Right ventricle myocardium inferior (tissue), 1 donor: ENCODE measurements at regions of chr2 and their contacts with region 1.

Region 1: DNA sequence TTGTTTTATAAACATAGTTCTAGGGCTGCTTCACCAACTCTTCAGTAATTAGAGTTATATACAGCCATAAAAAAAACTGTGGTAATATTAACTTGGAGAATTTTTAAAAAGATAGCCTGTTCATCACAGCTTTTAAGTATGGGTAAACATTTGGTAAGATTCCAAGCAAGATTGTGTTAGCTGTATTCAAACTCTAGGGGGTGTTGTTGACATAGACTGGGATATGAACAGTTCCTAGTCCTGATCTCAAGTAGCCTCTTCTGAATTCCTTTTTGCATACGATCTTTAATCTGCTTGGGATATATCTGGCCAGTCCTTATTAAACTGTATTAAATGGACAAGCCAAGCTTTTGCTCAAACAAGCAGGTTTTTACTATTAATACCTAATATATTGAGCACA is 13.4 kb downstream of the NOP58 start:
- DNase-seq: no peak
- ATAC-seq: peak; percentile 77

Region 2: DNA sequence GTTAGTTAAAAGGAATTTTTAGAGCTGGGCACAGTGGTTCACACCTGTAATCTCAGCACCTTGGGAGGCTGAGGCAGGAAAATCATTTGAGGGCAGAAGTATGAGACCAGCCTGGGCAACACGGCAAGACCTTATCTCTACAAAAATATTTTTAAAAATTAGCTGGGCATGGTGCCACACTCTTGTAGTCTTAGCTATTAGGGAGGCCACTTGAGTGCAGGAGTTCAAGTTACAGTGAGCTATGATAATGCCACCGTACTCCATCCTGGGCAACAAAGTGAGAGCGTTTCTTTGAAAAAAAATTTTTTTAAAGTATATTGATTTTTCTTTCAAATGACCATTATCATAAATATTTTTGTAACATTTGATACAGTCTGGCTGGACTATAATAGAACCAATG is 262.2 kb after region 1 on chr2:
- intact Hi-C with region 1: loop called (anchors 10 kb)
- DNase-seq: no peak
- ATAC-seq: peak; percentile 82

Region 3: GRCh38 chr2:202815548-202816360 is 536.8 kb after region 1 on chr2:
- intact Hi-C with region 1: loop called (anchors 10 kb)
- DNase-seq: no peak
- ATAC-seq: peak; percentile 72